Activated B cell treated with CpG ODN at 0.5 μM for 24 hours (primary cell): ENCODE measurements at regions of chr3 and their contacts with region 1.

Region 1: DNA sequence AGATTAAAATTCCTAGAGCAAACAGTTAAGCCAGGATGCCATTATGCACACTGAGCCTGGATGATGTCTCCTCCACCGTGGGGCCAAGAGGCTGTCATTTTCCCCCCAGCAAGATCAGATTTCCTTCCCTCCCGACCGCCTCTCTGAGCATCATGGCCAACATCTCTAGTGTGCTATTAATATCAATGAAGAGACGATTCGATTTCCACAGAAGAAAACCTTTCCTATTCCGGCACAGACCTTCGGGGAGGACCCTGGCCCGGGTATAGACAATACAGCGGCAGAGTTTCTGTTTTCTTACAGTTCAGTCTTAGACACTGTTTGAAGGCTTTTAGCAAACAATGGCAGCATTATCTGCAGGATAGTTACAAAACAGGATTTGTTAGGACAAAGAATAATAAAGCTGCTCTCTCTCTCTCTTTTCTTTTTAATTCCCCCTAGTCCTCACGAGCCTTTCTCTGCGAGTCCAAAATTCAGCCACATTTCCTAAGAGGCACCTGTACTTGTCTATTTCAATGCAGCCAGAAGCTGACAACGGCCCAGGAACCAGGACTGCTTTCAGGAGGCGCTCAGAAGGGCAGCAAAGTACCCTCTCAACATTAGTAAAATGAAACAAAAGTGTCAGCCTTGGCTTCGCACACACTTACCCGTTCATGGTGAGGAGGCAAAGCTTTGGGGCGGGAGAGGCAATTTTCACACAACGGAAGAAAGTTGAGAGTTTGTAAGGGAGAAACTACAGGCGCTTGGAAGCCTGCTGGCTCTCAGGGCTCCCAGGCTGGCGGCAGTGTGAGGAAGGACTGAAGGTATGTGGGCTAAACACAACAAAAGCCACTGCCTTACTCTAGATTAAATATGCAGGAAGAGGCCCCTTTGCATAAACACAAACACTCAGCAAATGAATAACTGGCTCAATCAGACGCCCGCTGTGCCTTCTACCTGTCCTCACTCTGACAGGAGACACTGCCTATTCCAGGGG is 278.0 kb downstream of the FOXP1 start:
- DNase-seq: no peak
- ATAC-seq: peak; percentile 38
- H3K4me3 Mint-ChIP-seq: peak overlapping the region; percentile 92
- H3K27ac Mint-ChIP-seq: peak overlapping the region; percentile 94
- H3K4me1 Mint-ChIP-seq: peaks cover 79% of the 10 kb centered on the region
- H3K27me3 Mint-ChIP-seq: no peaks in the 10 kb centered on the region
- CTCF ChIP-seq: no peak

Region 2: GRCh38 chr3:70531063-70531657 is 774.4 kb before region 1 on chr3:
- CTCF ChIA-PET with region 1: interaction called, 4 read pairs
- POLR2A ChIA-PET with region 1: no interaction called
- intact Hi-C with region 1: loop called (anchors 1 kb)
- DNase-seq: no peak
- ATAC-seq: no peak
- H3K4me3 Mint-ChIP-seq: no peak overlapping the region
- H3K27ac Mint-ChIP-seq: no peak overlapping the region
- H3K4me1 Mint-ChIP-seq: no peaks in the 10 kb centered on the region
- H3K27me3 Mint-ChIP-seq: no peaks in the 10 kb centered on the region
- CTCF ChIP-seq: no peak

Region 3: DNA sequence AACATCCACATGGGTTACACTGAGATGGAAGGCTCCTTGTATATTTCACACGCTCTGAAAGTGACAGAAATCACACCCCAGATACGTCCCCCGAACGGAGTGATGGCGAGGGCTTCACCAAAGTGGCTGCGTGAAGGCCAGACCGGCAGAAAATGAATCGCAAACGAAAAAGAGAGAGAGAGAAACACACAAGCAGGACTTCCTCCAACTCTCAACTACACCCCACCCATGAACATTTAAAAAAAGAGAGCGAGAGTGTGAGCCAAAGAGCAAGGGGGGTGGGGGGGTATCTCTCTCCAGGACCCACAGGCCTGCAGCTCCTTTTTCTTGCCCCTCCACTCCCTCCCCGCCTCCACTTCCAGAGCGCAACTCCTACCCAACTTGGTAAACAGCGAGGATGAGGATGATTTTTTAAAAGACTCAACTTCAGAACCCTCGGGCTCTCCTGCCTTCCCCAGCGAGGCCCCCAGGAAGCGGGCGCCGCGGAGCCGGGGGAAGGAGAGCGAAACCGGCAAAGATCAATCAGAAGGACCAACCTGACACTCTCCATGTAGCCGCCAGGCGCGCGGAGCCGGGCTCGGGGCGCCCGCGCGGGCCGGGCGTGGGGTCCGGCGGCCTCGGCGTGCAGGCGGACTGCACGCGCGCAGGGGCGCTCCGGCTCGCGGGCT is 241.1 kb before region 1 on chr3:
- CTCF ChIA-PET with region 1: interaction called, 4 read pairs
- POLR2A ChIA-PET with region 1: interaction called, 41 read pairs
- intact Hi-C with region 1: loop called (anchors 2 kb)
- DNase-seq: peak; percentile 64
- ATAC-seq: peak; percentile 33
- H3K4me3 Mint-ChIP-seq: no peak overlapping the region
- H3K27ac Mint-ChIP-seq: no peak overlapping the region
- H3K4me1 Mint-ChIP-seq: peaks cover 67% of the 10 kb centered on the region
- H3K27me3 Mint-ChIP-seq: no peaks in the 10 kb centered on the region
- CTCF ChIP-seq: no peak

Region 4: DNA sequence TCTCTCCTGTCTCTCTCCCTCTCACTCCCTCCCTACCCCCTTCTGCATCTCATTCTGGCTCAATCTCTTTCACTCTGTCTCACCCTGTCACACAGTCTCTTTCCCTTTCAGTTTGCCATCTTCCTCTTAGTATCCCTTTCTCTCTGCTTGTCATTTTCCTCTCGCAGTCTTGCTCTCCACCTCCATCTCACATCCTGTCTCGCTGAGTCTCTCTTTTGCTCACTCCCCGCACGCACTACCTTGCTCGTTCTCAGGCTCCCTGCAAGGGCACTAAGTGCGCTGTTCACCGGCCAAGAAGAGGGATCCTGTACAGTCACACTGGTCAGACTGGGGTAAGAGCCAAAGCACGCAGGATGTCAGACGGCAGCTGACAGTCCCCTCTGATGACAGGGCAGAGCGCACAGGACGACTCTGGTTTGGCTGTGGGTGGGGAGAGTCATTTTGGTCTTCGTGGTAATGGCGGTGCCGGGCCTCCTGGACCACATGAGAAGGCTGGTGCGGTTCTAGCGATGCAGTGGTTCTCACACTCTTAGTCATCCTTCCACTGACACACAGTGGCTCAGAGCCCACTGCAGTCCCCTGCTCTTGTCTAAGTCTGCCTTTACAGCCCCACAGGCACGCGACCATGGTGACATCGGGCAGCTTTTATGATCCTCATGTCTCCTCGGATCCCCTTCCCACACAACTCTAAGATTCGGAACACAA is 78.8 kb before region 1 on chr3:
- CTCF ChIA-PET with region 1: no interaction called
- POLR2A ChIA-PET with region 1: interaction called, 5 read pairs
- intact Hi-C with region 1: loop called (anchors 2 kb)
- DNase-seq: peak; percentile 50
- ATAC-seq: peak; percentile 76
- H3K4me3 Mint-ChIP-seq: peak overlapping the region; percentile 89
- H3K27ac Mint-ChIP-seq: peak overlapping the region; percentile 97
- H3K4me1 Mint-ChIP-seq: peaks cover 76% of the 10 kb centered on the region
- H3K27me3 Mint-ChIP-seq: no peaks in the 10 kb centered on the region
- CTCF ChIP-seq: no peak

Region 5: DNA sequence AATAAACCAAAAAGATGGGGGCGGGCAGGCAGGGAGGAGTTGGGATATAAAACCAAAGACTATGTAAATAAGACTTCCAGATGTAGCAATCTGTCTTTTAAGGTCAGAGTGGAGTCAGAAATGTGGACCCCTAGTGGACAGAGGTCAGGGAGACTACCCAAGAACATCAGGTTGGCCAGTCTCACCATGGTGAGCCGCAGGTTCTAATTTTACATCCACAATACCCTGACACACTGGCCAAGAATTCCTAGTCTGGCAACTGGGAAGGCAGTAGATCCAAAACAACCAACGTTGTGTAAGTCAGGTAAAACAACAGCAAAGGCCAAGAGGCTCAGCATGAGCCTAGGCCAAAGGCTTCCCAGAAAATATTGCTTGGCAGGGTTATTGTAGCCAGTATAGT is 74.6 kb after region 1 on chr3:
- CTCF ChIA-PET with region 1: no interaction called
- POLR2A ChIA-PET with region 1: no interaction called
- intact Hi-C with region 1: loop called (anchors 5 kb)
- DNase-seq: no peak
- ATAC-seq: no peak
- H3K4me3 Mint-ChIP-seq: no peak overlapping the region
- H3K27ac Mint-ChIP-seq: peak overlapping the region; percentile 24
- H3K4me1 Mint-ChIP-seq: peaks cover 80% of the 10 kb centered on the region
- H3K27me3 Mint-ChIP-seq: no peaks in the 10 kb centered on the region
- CTCF ChIP-seq: no peak